ENCODE measurements at regions of chr19 and their contacts with region 1.

Region 1: DNA sequence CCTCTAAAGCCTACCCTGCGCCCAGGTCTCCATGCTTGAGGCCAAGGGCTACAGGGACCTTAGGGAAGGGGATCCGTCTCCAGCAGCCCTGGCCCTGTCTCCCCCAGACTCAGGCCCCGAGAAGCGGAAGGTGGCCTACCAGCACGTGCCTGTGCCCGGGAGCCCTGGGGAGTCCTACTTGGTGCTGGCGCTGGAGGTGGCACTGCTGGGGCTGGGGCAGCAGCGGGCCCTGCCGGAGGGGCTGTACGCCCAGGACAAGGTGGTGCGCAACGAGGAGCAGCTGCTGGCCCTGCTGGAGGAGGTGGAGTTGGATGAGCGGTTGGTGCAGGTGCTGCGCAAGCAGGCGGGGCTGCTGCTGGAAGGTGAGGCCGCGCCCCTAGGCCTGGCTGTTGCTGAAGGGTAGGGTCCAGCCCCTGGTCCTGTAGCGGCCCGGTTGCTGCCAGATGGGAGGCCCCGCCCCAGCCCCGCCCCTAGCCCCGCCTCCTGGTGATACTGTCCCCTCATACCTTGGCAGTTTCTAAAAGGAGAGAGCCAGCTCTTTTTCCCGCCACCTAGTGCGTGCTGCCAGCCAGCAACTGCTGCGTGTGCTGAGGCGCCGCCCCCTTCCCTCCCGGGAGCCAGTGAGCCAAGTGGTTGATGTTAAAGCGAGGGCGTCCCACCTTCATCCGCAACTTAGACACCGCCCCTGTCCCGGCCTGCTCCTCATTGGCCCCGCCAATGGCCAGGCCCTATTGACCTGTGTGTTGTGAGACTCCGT is 22.6 kb downstream of the ZSWIM4 start:
- DNase-seq: no peak
- H3K4me3 Mint-ChIP-seq: no peak overlapping the region
- H3K27ac Mint-ChIP-seq: no peak overlapping the region
- H3K4me1 Mint-ChIP-seq: no peaks in the 10 kb centered on the region
- H3K27me3 Mint-ChIP-seq: no peaks in the 10 kb centered on the region
- CTCF ChIP-seq: no peak

Region 2: GRCh38 chr19:13794757-13795589 is 22.8 kb before region 1 on chr19 and contains the start of gene ZSWIM4:
- CTCF ChIA-PET with region 1: interaction called, 10 read pairs
- intact Hi-C with region 1: no loop called
- DNase-seq: peak; percentile 95
- H3K4me3 Mint-ChIP-seq: peak within 1 kb of the TSS; percentile 90
- H3K27ac Mint-ChIP-seq: peak within 1 kb of the TSS; percentile 94
- H3K4me1 Mint-ChIP-seq: no peaks in the 10 kb centered on the region
- H3K27me3 Mint-ChIP-seq: no peaks in the 10 kb centered on the region
- CTCF ChIP-seq: no peak
- total RNA-seq, gene ZSWIM4: 10.7 and 11.5 TPM in 2 replicates

Region 3: GRCh38 chr19:13877303-13877702 is 59.5 kb after region 1 on chr19:
- CTCF ChIA-PET with region 1: no interaction called
- intact Hi-C with region 1: no loop called
- DNase-seq: no peak
- H3K4me3 Mint-ChIP-seq: no peak overlapping the region
- H3K27ac Mint-ChIP-seq: no peak overlapping the region
- H3K4me1 Mint-ChIP-seq: no peaks in the 10 kb centered on the region
- H3K27me3 Mint-ChIP-seq: no peaks in the 10 kb centered on the region
- CTCF ChIP-seq: no peak

Region 4: GRCh38 chr19:14248578-14249011 is 430.8 kb after region 1 on chr19:
- CTCF ChIA-PET with region 1: interaction called, 15 read pairs
- intact Hi-C with region 1: no loop called
- DNase-seq: no peak
- H3K4me3 Mint-ChIP-seq: peak overlapping the region; percentile 26
- H3K27ac Mint-ChIP-seq: no peak overlapping the region
- H3K4me1 Mint-ChIP-seq: no peaks in the 10 kb centered on the region
- H3K27me3 Mint-ChIP-seq: peaks cover 18% of the 10 kb centered on the region
- CTCF ChIP-seq: no peak